ENCODE measurements at regions of chr19 and their contacts with region 1.

Region 1: DNA sequence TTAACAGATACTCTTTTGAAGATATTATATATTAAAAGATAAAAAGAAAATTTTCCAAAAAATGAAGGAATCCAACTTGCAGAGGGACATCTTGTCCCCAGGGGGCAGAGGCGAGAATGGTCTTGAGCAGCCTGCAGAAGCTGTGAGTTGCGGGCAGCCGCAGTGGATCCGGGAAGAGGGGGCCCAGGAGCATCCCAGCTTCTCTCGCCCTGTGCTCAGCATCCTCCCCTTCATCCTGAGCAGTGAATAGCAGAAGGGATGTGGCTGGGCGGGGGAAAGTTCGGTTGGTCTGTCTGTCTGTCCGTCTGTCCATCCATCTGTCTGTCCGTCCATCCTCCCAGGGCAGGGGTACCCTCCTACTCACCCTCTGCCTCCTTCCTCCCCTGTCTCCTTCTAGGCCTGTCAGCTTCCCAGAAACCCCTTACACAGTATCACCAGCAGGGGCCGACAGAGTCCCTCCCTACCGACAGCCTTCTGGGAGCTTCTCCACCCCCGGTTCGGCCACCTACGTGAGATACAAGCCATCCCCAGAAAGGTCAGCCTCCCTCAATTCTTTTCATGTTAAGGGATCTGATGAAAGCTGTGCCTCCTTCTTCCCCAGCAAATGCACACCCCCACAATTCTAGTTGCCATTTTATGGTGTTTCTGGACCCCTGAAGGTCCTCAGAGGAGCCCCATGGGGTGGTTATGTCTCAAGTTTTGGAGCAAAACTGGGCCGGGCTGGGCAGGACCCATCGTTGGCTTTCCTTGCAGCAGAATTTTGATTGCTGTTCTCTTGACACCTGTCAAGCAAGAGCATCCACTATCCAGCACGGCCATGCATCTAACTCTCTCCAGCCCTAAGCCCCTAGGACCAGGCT is 81.6 kb downstream of the DPF1 start:
- DNase-seq: peak; percentile 41 to 85
- H3K4me3 ChIP-seq: no peak overlapping the region
- H3K27ac ChIP-seq: no peak overlapping the region
- H3K4me1 ChIP-seq: no peaks in the 10 kb centered on the region; a peak in 1 of 7 replicates
- H3K27me3 ChIP-seq: no peaks in the 10 kb centered on the region
- CTCF ChIP-seq: peak; percentile 88 to 95 (median 92)
- EP300 ChIP-seq: no peak
- POLR2A ChIP-seq: no peak
- RAD21 ChIP-seq: peak; percentile 89 to 94

Region 2: GRCh38 chr19:38056646-38057045 is 85.8 kb before region 1 on chr19:
- CTCF ChIA-PET with region 1: no interaction called
- POLR2A ChIA-PET with region 1: no interaction called
- DNase-seq: no peak
- H3K4me3 ChIP-seq: no peak overlapping the region
- H3K27ac ChIP-seq: no peak overlapping the region
- H3K4me1 ChIP-seq: peaks cover 3 to 29% (median 19%) of the 10 kb centered on the region in 4 experiments
- H3K27me3 ChIP-seq: no peaks in the 10 kb centered on the region
- CTCF ChIP-seq: no peak
- EP300 ChIP-seq: no peak
- POLR2A ChIP-seq: no peak
- RAD21 ChIP-seq: no peak

Region 3: DNA sequence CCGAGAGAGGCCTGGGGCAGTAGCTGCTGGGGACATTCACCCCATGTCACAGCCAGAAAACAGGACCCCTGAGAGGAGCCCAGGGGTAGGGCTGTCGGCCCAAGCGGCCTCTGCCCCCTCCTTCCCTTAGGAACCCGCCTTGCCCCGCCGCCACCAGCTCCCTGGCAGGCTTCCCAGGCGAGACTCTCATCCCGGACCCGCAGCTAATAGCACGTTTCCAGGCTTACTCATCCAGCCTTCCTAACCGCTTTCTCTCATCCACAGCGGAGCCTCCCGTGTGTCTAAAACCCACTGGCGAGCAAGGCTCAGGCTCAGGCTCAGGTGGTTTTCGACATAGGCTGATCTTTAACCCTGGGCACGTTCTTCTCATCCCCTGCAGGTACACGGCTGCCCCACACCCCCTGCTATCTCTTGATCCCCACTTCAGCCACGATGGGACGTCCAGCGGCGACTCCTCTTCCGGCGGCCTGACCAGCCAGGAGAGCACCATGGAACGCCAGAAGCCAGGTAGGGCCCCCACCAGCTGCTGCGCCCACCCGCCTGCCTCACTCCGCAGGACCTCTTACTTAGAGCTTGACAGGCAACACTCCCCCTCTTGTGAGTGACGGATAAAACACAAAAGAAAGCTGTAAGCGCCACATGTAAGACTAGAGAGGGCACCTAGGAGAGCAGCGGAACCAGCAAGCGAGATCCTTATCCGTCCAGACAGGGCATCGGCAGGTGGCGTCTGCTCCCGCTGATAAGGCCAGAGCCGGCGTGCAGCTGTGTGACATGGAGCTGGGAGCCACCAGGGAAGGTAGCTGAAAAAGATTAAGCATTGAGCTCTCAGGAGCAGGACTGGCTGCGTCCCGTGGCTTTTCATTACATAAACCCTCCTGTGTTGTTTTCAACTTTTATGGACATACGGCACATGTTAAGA is 10.3 kb after region 1 on chr19:
- CTCF ChIA-PET with region 1: interaction called, 41 read pairs
- POLR2A ChIA-PET with region 1: interaction called, 5 read pairs
- DNase-seq: no peak
- H3K4me3 ChIP-seq: no peak overlapping the region
- H3K27ac ChIP-seq: no peak overlapping the region
- H3K4me1 ChIP-seq: no peaks in the 10 kb centered on the region
- H3K27me3 ChIP-seq: no peaks in the 10 kb centered on the region
- CTCF ChIP-seq: no peak
- EP300 ChIP-seq: no peak
- POLR2A ChIP-seq: no peak
- RAD21 ChIP-seq: no peak

Region 4: GRCh38 chr19:38168637-38169036 is 26.2 kb after region 1 on chr19:
- CTCF ChIA-PET with region 1: interaction called, 10 read pairs
- POLR2A ChIA-PET with region 1: no interaction called
- DNase-seq: no peak
- H3K4me3 ChIP-seq: 0 out of 8 replicates have a peak overlapping the region, but pooled peaks of 1 of the 4 experiments have one; percentile 10
- H3K27ac ChIP-seq: no peak overlapping the region
- H3K4me1 ChIP-seq: peaks cover 2 to 10% (median 4%) of the 10 kb centered on the region in 4 experiments
- H3K27me3 ChIP-seq: no peaks in the 10 kb centered on the region
- CTCF ChIP-seq: no peak
- EP300 ChIP-seq: no peak
- POLR2A ChIP-seq: no peak
- RAD21 ChIP-seq: no peak

Region 5: DNA sequence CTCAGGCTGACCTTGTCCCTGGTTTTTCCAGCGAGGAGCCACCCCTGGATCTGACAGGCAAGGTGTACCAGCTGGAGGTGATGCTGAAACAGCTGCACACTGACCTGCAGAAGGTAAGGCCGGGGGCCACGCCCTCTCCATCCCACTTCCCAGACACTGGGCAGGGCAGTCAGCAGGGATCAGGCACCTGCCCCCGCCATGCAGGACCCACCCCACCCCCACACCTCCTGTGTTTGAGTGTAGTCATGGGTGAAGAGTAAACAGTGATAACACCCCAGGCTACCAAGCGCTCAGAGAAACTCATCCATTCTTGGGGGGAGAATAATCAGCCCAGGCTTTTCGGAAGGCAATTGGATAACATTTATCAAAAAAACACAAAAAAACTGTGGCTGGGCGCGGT is 61.7 kb after region 1 on chr19:
- CTCF ChIA-PET with region 1: interaction called, 26 read pairs
- POLR2A ChIA-PET with region 1: interaction called, 5 read pairs
- DNase-seq: no peak
- H3K4me3 ChIP-seq: no peak overlapping the region
- H3K27ac ChIP-seq: no peak overlapping the region
- H3K4me1 ChIP-seq: peaks cover 0 to 8% (median 6%) of the 10 kb centered on the region in 4 experiments; a peak in 6 of 7 replicates
- H3K27me3 ChIP-seq: no peaks in the 10 kb centered on the region
- CTCF ChIP-seq: no peak
- EP300 ChIP-seq: no peak
- POLR2A ChIP-seq: no peak
- RAD21 ChIP-seq: no peak

Region 6: GRCh38 chr19:38229585-38230073 is 87.2 kb after region 1 on chr19:
- CTCF ChIA-PET with region 1: interaction called, 41 read pairs
- POLR2A ChIA-PET with region 1: no interaction called
- DNase-seq: peak in 1 of 2 experiments; percentile 85
- H3K4me3 ChIP-seq: peak overlapping the region; percentile 5 to 86 (median 40); a peak in 5 of 8 replicates
- H3K27ac ChIP-seq: no peak overlapping the region
- H3K4me1 ChIP-seq: peaks cover 6 to 19% (median 13%) of the 10 kb centered on the region in 4 experiments
- H3K27me3 ChIP-seq: peaks cover 0 to 10% (median 5%) of the 10 kb centered on the region in 4 experiments; a peak in 3 of 7 replicates
- CTCF ChIP-seq: no peak
- EP300 ChIP-seq: no peak
- POLR2A ChIP-seq: no peak
- RAD21 ChIP-seq: no peak

Measured in H1 (cell line).